Calu3 (cell line): ENCODE measurements at regions of chr1 and their contacts with region 1.

Region 1: GRCh38 chr1:10387413-10388079 is 11.3 kb upstream of the PGD start:
- DNase-seq: peak; percentile 6
- H3K4me3 Mint-ChIP-seq: peak overlapping the region; percentile 43
- H3K27ac Mint-ChIP-seq: peak overlapping the region; percentile 76
- H3K4me1 Mint-ChIP-seq: peaks cover 14% of the 10 kb centered on the region
- H3K27me3 Mint-ChIP-seq: no peaks in the 10 kb centered on the region
- CTCF ChIP-seq: no peak

Region 2: GRCh38 chr1:10398734-10399623 is 11.4 kb after region 1 on chr1 and contains the start of gene PGD:
- CTCF ChIA-PET with region 1: interaction called, 6 read pairs
- intact Hi-C with region 1: loop called (anchors 1 kb)
- DNase-seq: peak; percentile 97
- H3K4me3 Mint-ChIP-seq: peak within 1 kb of the TSS; percentile 80
- H3K27ac Mint-ChIP-seq: peak within 1 kb of the TSS; percentile 63
- H3K4me1 Mint-ChIP-seq: no peaks in the 10 kb centered on the region
- H3K27me3 Mint-ChIP-seq: no peaks in the 10 kb centered on the region
- CTCF ChIP-seq: no peak
- total RNA-seq, gene PGD: 142 and 155 TPM in 2 replicates

Region 3: DNA sequence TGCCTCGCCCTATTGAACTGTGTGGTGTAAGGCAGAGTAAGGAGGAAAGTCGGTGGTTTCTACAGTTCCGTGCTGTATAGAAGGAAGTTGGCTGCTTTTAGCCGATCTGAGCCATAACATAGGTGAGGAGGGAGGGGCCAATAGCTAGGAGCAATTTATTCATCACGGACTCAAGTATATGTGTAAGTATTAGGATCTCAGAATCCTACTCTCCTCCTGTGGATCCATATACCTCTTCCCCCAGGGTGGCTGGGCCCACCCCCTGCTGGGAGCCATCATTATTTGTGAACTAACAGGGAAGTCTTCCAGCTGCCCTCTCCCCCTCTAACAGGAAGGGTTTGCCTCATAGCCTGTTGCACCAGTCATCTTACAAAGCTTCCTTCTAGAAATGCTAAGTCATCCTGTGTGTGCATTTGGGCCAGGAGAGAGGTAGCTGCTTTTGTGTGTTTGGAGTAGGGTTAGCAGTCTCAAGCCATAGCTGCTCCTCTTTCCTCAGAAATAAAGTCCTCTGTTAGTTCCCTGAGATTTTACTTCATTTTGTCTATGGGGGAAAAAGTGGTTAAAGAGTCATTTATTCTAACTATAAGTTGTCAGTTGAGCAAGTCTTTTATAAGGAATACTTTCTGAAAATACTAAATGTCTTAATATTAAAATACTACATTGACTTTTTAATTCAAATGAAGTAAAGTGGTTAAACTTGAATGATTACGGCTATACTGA is 27.8 kb after region 1 on chr1:
- CTCF ChIA-PET with region 1: interaction called, 15 read pairs
- intact Hi-C with region 1: no loop called
- DNase-seq: peak; percentile 50
- H3K4me3 Mint-ChIP-seq: peak overlapping the region; percentile 32
- H3K27ac Mint-ChIP-seq: peak overlapping the region; percentile 96
- H3K4me1 Mint-ChIP-seq: no peaks in the 10 kb centered on the region
- H3K27me3 Mint-ChIP-seq: no peaks in the 10 kb centered on the region
- CTCF ChIP-seq: no peak

Region 4: DNA sequence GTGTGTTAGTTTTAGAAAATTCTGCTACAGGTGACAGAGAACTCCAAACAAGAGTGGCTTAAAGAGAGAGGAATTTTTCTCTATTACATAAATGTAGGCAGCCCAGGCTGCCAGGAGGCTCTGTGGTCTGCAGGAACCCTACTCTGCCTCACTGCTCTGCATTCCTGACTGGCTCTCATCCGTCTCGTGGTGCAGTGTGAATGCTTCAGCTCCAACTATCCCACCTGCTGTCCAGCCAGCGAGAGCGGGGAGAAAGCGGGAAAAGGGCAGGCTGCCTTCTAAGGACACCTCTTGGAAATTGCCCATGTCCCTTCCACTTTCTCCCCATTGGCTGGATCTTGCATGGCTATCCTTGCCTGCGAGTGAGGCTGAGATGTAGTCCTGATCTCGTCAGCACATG is 218.5 kb after region 1 on chr1:
- CTCF ChIA-PET with region 1: no interaction called
- intact Hi-C with region 1: no loop called
- DNase-seq: no peak
- H3K4me3 Mint-ChIP-seq: no peak overlapping the region
- H3K27ac Mint-ChIP-seq: no peak overlapping the region
- H3K4me1 Mint-ChIP-seq: no peaks in the 10 kb centered on the region
- H3K27me3 Mint-ChIP-seq: no peaks in the 10 kb centered on the region
- CTCF ChIP-seq: no peak